Psoas muscle (tissue), 8 donors: ENCODE measurements at regions of chr22 and their contacts with region 1.

Region 1: DNA sequence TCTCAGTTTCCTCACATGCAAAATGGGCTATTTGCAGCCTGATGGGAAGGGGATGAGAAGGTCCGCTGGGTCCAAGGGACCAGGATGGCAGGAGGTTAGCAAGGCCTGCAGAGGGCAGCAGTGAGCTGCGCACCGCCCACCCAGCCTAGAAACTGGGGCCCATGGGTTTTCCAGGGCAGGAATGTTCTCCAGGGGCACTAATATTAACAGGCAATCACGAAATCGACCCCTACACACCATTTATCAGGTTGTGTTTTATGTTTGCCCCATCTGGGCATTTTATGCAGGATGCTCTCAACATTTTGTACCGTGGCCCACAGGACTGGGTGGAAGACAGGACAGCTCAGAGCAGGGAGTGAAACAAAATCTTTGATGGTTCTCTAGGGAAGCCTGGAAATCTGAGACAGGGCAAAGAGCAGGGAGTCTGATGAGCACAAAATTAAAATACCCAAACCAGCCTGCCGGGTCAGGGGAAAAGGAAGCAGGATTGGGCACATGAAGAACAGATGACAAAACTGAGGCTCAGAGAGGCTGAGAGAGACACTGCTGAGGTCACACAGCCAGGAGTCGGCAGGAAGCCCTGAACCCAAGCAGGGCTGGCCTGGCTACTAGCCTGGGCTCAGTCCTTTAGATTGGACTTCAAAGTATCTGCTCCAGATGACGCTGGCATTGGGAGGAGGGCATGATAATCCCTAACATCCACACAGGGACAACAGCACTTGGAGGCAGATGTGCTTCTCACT is 1.6 kb upstream of the BCR start:
- DNase-seq: peak; percentile 60 to 78
- ATAC-seq: peak; percentile 72 to 79 (median 74)
- H3K4me3 ChIP-seq: no peak overlapping the region
- H3K27ac ChIP-seq: no peak overlapping the region
- H3K4me1 ChIP-seq: peaks cover 34% of the 10 kb centered on the region
- H3K27me3 ChIP-seq: no peaks in the 10 kb centered on the region
- CTCF ChIP-seq: peak; percentile 97

Region 2: GRCh38 chr22:23147617-23148331 is 30.9 kb before region 1 on chr22:
- intact Hi-C with region 1: no loop called
- DNase-seq: no peak
- ATAC-seq: no peak
- H3K4me3 ChIP-seq: no peak overlapping the region
- H3K27ac ChIP-seq: no peak overlapping the region
- H3K4me1 ChIP-seq: peaks cover 4% of the 10 kb centered on the region
- H3K27me3 ChIP-seq: peaks cover 0 to 26% (median 0%) of the 10 kb centered on the region in 3 donors
- CTCF ChIP-seq: no peak

Region 3: GRCh38 chr22:23219822-23220484 is 41.3 kb after region 1 on chr22:
- intact Hi-C with region 1: loop called in 1 of 2 experiments (anchors 5 kb)
- DNase-seq: no peak
- ATAC-seq: peak in 2 of 4 donors; percentile 20 to 35
- H3K4me3 ChIP-seq: no peak overlapping the region
- H3K27ac ChIP-seq: no peak overlapping the region
- H3K4me1 ChIP-seq: peaks cover 26% of the 10 kb centered on the region
- H3K27me3 ChIP-seq: peaks cover 0 to 37% (median 0%) of the 10 kb centered on the region in 3 donors
- CTCF ChIP-seq: no peak

Region 4: DNA sequence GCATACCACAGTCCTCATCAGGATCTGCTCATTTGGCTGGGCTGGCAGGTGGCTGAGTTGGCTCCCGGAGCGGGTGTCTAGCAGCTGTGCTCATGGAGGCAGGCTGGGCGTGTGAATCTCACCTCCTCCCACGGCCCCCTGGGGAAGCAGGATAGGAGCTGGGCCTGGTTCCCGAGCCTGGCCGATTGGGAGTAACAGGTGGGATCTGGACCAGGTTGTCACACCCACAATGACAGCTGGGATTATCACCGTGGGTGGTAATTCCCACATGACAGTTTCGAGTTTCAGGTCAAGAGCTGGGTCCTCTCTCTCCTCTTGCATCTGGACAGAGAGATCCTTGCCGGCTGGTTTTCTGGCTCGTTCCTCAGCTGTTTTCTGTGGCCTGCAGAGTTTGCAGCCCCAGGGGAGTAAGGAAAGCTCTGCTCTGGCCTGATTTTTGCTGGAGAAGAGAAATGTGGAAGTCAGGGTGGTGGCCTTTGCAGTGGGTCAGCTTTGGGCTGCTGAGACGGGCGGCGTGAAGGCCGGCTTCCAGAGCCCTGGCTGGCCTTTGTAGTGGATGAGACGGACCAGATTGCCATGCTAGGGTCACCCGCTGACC is 58.6 kb after region 1 on chr22:
- intact Hi-C with region 1: loop called in 1 of 2 experiments (anchors 2 kb)
- DNase-seq: peak; percentile 77 to 90
- ATAC-seq: peak; percentile 87 to 95 (median 92)
- H3K4me3 ChIP-seq: no peak overlapping the region
- H3K27ac ChIP-seq: no peak overlapping the region
- H3K4me1 ChIP-seq: peaks cover 21% of the 10 kb centered on the region
- H3K27me3 ChIP-seq: peaks cover 0 to 14% (median 2%) of the 10 kb centered on the region in 3 donors
- CTCF ChIP-seq: no peak

Region 5: DNA sequence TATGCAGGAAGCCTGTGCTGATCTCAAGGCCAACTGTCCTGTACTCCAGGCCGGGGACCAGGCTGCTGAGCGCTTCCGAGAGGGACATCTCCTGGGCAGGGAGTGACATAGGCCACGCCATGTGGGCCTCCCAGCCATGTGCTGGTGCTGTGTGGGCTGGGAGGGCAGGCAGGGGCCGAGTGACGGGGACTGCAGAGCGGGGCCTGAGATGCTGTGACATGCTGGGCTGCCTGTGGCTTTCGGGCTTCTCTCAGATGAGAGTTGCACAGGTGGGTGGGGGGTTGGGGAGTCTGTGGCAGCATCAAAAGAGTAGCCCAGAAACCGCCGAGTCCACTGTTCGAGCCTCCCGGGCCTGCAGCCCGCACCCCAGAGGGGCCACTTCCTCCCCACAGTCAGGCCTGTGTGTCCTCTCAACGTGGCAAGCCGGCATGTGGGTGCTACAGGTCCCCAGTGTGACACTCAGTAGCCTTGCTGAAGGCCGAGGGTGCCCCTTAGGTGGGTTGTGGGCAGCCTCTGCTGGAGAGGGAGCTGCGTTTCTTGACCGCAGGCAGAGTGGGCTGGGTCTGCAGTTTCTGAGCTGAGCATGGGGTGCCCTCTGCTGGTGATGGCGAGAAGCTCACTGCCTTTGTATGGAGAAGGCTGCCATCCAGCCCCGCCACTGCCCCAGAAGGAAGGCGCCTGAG is 102.9 kb after region 1 on chr22:
- intact Hi-C with region 1: loop called (anchors 1 kb)
- DNase-seq: peak; percentile 76 to 90
- ATAC-seq: peak; percentile 81 to 93 (median 86)
- H3K4me3 ChIP-seq: no peak overlapping the region
- H3K27ac ChIP-seq: no peak overlapping the region
- H3K4me1 ChIP-seq: no peaks in the 10 kb centered on the region
- H3K27me3 ChIP-seq: no peaks in the 10 kb centered on the region
- CTCF ChIP-seq: peak; percentile 96

Region 6: GRCh38 chr22:23385291-23386244 is 206.9 kb after region 1 on chr22:
- intact Hi-C with region 1: loop called in 1 of 2 experiments (anchors 5 kb)
- DNase-seq: peak; percentile 75 to 85
- ATAC-seq: peak; percentile 81 to 93 (median 89)
- H3K4me3 ChIP-seq: no peak overlapping the region
- H3K27ac ChIP-seq: no peak overlapping the region
- H3K4me1 ChIP-seq: no peaks in the 10 kb centered on the region
- H3K27me3 ChIP-seq: peaks cover 0 to 2% (median 0%) of the 10 kb centered on the region in 3 donors
- CTCF ChIP-seq: peak; percentile 98